ENCODE measurements at regions of chr1 and their contacts with region 1.

Region 1: DNA sequence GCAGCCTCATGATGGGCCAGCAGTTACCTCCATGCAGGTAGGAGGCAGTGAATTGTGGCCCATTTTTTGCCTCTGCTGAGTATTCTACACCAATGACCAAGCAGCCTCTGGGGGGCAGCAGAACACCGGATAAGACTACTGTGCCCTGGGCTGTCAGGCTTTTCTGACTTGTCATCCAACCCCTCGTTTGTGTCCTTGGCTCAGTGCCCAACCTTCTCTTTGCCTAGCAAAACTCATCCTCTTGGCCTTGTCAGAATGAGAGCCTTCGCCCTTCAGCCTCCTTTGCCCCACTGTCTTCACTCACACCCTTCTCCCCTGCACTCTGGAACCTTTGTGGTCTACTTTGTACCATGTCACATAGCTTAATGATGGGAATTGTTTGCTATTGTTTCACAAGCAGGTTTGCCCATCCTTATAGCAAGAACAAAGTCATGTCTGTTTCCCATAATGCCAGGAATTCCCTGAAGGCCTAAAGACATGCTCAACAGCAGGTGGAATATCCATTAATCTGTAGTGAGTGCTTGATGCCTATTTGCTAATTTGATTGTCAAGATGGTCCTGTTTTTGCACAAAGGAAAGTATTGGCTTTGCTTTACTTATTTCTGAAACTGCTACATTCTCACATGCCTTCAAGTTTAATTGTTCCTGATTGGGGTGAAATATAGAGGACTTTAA is 255.9 kb downstream of the HHAT start:
- DNase-seq: peak; percentile 91
- ATAC-seq: peak; percentile 96
- H3K4me3 Mint-ChIP-seq: no peak overlapping the region
- H3K27ac Mint-ChIP-seq: no peak overlapping the region
- H3K4me1 Mint-ChIP-seq: peaks cover 7% of the 10 kb centered on the region
- H3K27me3 Mint-ChIP-seq: no peaks in the 10 kb centered on the region

Region 2: DNA sequence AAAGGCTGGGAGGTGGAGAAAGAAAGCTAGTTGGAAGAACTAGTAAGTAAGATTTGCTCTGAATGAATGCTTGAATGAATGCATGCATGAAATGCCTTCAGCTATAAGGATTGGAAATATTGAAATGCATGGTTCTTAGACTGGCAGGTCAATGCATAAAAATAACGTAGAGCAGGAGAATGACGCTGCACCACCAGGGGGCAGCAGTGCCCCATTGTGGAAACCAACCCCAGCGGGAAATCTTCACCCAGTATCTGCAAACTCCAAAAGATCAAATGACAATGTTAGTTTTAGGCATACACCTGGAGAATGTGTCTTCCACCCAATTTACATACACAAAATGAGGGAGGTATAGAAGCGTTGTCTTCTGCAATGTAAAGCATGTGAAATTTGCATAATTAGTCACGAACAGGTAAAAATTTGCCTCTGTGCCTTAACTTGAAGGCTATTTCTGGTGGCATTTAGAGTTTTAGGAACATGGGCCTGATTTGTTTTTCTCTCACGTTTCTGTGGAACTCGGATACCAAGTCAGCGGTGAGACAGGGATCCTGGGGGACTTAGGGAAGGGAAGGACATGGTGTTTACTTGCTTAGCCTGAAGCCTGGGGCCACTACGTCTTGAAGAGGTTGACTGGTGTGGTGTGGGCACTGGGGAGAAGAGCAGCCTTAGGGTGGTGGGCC is 177.2 kb before region 1 on chr1:
- CTCF ChIA-PET with region 1: interaction called, 3 read pairs
- POLR2A ChIA-PET with region 1: no interaction called
- intact Hi-C with region 1: loop called (anchors 1 to 2 kb)
- DNase-seq: peak; percentile 88
- ATAC-seq: peak; percentile 83
- H3K4me3 Mint-ChIP-seq: no peak overlapping the region
- H3K27ac Mint-ChIP-seq: no peak overlapping the region
- H3K4me1 Mint-ChIP-seq: peaks cover 4% of the 10 kb centered on the region
- H3K27me3 Mint-ChIP-seq: no peaks in the 10 kb centered on the region

Region 3: GRCh38 chr1:210464519-210465039 is 120.0 kb before region 1 on chr1:
- CTCF ChIA-PET with region 1: no interaction called
- POLR2A ChIA-PET with region 1: no interaction called
- intact Hi-C with region 1: loop called in 1 of 2 experiments (anchors 5 kb)
- DNase-seq: peak; percentile 45
- ATAC-seq: peak; percentile 92
- H3K4me3 Mint-ChIP-seq: no peak overlapping the region
- H3K27ac Mint-ChIP-seq: peak overlapping the region; percentile 37
- H3K4me1 Mint-ChIP-seq: peaks cover 24% of the 10 kb centered on the region
- H3K27me3 Mint-ChIP-seq: no peaks in the 10 kb centered on the region

Region 4: GRCh38 chr1:210951279-210951678 is 366.7 kb after region 1 on chr1:
- CTCF ChIA-PET with region 1: interaction called, 3 read pairs
- POLR2A ChIA-PET with region 1: no interaction called
- intact Hi-C with region 1: loop called (anchors 1 kb)
- DNase-seq: no peak
- ATAC-seq: no peak
- H3K4me3 Mint-ChIP-seq: no peak overlapping the region
- H3K27ac Mint-ChIP-seq: no peak overlapping the region
- H3K4me1 Mint-ChIP-seq: no peaks in the 10 kb centered on the region
- H3K27me3 Mint-ChIP-seq: peaks cover 6% of the 10 kb centered on the region

Region 5: DNA sequence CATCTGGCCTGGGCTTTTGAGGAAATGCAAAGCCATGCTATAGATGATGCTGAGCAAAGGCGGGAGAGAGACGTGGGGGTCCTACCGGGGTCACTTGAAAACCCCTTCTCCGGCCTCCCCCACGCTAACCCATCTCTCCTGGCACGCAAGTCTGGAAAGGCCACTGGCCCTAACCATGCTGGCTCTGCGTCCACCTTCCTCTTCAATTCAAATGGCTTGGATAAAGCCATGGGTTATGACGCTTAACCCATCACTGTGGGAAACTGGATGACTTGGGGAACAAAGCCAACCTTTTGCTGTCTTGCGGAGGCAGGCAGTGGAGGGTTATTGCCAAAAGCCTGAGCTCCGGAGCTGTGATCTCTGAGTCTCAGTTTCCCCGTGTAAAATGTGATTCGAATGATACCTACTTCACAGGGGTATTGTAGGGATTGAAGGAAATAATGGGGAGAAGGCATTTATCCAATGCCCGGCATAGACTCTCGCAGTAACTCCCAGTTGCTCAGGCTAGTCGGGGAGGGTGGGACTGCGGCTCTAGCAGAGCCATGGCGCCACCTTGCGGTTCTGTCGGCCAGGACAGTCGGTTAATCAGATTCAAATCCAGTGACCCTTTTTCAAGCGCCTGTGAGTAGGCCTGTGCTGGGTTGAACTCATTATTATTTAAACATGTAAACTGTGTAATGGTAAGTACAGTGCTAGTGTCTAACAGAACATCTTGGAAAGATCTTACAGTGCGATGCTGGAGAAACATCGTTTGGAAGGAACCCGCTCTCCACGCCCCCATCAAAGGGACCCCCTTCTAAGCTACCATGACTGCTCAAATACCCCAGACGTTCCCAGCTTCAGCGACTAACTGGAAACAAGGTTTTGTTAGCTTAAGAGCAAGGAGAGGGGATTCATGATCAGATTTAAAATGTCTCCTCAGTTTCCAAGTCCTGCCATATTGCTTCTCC is 1070.5 kb after region 1 on chr1:
- CTCF ChIA-PET with region 1: interaction called, 3 read pairs
- POLR2A ChIA-PET with region 1: no interaction called
- intact Hi-C with region 1: loop called in 1 of 2 experiments (anchors 1 kb)
- DNase-seq: peak; percentile 91
- ATAC-seq: peak; percentile 100
- H3K4me3 Mint-ChIP-seq: no peak overlapping the region
- H3K27ac Mint-ChIP-seq: no peak overlapping the region
- H3K4me1 Mint-ChIP-seq: no peaks in the 10 kb centered on the region
- H3K27me3 Mint-ChIP-seq: peaks cover 1% of the 10 kb centered on the region